Posterior vena cava (tissue), 2 donors: ENCODE measurements at regions of chr3 and their contacts with region 1.

Region 1: DNA sequence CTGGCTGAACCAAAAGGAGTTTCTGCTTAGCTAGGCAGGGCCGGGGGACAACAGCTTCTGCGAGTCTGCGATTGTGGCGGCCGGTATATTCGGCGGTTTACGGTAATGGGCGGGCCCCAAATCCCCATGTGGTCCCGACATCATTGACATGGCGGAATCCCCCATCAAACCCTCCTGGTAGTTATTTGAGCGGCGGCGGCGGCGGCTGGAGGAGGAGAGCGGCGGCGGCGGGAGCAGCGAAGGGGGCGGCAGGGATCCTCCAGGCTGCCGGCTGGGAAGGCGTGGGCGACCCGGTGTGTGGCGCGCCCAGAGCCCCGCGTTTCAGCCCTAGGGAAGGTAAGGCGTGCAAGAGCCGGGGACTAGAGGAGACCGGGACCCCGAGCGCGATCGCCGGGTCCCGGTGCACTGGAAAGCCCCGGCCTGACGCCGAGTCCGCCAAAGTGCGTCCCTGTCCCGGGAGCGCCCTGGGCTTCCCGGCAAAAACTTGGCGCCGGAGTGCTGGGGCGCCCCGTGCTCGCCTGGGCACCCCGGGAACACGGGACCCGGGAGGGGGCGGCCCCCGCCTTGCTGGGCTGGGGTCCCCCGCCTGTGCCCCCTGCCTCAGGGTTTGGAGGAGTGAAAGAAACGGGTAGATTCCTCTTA is at the start of gene FNDC3B:
- DNase-seq: peak; percentile 97
- total RNA-seq, gene FNDC3B: 142 to 167 TPM

Region 2: DNA sequence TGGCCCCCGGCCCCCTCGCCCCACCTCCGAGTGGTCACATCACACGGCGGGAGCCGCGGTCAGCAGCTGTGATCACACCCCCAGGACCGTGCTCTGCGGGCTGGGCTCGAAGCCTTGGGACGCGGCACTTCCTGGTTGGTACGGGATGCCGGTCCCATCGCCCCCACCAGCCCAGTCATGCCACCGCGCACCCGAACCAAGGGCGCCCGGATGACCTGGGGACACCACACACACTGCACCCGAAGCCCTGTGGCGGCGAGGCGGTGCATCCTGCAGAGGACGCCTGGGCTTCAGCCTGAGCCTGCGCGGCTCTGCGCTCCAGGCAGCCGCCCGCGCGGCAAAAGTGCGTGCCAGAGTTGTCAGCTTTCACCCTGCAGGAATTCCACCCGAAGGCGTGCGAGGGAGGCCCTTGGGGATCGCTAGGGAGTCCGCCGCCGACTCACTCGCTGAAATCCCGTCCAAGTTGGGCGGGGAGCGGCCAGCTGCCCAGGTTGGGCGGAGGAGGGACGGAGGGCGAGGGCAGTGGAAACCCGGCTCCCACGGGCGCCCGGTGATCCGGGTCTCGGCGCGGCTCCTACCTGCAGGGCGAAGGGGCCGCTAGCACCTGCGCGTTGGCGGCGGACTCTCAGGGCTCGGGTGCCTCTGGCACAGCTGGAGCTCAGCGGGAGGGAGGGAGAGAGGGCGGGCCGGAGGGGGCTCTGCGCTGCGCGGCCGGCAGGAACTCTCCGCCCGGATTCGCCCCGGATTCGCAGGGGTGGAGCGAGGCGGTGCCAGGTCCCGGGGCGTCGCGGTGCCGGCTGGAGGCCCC is 229.5 kb before region 1 on chr3 and contains the start of gene PLD1:
- intact Hi-C with region 1: loop called in 1 of 2 experiments (anchors 10 kb)
- DNase-seq: peak; percentile 96
- total RNA-seq, gene PLD1: 18.5 to 30.9 TPM

Region 3: DNA sequence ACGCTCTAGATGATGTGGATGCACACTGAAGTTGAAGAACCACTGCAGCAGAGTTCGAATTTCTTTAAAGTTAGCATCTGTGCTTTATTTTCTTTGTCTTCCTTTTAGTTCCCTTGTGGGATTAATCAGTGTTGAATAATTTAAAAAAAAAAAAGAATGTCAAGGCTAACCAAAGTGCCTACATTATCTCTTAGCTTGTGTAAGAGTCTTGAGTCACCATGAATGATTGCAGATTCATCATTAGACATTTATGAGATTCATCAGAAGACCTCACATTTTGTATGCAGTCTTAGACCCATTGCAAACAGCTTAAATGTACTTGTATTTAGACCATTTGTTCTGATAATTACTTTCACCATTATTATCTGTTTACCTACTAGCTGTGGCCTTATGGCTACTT is 182.0 kb after region 1 on chr3:
- intact Hi-C with region 1: no loop called
- DNase-seq: no peak

Region 4: GRCh38 chr3:172317984-172318383 is 278.4 kb after region 1 on chr3:
- intact Hi-C with region 1: loop called in 1 of 2 experiments (anchors 2 kb)
- DNase-seq: peak; percentile 85